Natural killer cell (primary cell): ENCODE measurements at regions of chr7 and their contacts with region 1.

Region 1: DNA sequence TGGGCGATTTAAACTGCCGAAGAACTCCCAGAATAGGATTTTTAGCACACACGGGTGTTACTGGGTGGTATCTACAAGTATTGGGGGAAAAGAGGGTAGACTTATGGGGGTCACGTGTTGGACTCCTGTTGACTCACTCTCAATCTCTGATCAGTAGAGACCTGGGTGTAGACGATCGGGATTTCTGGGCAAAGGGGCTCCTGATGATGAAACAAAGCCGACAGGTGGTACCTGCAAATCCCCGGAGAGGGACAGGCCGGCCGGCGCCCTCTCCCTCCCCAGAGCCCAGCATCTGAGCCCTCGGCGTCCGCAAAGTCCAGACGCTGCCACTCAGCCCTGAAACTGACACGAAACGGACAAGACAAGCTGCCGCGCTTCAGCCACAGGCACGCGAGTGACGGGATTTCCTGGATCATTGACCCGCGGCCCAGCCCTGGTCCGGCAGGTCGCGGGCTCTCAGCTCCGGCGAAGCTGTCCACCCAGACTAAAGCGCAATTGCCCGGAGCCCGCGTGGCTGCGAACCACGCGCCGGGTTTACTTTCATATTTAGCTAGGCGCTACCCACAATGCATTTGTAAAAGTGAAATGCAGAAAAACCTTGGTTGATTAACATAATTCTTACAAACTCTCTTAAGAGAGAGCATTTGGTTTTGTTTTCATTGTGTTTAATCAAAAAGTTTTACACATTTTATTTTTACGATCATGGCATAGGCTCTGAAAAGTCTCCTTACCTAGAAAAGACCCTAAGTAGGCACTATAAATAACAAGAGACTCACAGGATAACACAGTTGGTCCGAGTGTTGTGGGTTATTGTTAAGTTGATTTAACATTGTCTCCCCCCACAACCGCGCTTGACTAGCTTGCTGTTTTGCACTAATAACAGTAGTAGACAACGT is 56.9 kb upstream of the EZH2 start:
- DNase-seq: peak; percentile 63 to 87
- ATAC-seq: peak; percentile 79 to 90 (median 86)
- H3K4me3 ChIP-seq: peak overlapping the region; percentile 85
- H3K4me3 Mint-ChIP-seq: peak overlapping the region; percentile 94
- H3K27ac ChIP-seq: peak overlapping the region; percentile 79
- H3K27ac Mint-ChIP-seq: peak overlapping the region; percentile 95
- H3K4me1 ChIP-seq: peaks cover 7% of the 10 kb centered on the region
- H3K4me1 Mint-ChIP-seq: peaks cover 6 to 13% of the 10 kb centered on the region in 2 donors
- H3K27me3 ChIP-seq: no peaks in the 10 kb centered on the region
- H3K27me3 Mint-ChIP-seq: no peaks in the 10 kb centered on the region
- CTCF ChIP-seq: no peak

Region 2: DNA sequence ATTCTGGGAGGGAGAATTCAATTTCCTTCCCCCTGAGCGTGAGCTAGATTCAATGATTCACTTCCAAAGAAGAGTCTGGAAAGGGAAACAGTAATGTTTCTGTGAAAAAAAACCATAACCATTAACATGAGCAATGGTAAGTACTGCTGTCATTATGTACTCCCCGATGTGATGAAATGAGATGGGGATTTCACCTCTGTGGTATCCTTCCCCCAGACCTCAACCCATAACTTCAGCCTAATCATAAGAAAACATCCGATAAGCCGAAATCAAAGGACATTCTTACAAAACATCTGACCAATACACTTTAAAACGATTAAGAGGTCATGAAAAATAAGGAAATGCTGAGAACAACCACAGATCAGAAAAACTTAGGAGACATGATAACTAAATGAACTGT is 84.1 kb before region 1 on chr7:
- intact Hi-C with region 1: loop called (anchors 1 kb)
- DNase-seq: peak in 1 of 2 donors; percentile 29
- ATAC-seq: peak; percentile 40 to 72 (median 60)
- H3K4me3 ChIP-seq: no peak overlapping the region
- H3K4me3 Mint-ChIP-seq: no peak overlapping the region
- H3K27ac ChIP-seq: no peak overlapping the region
- H3K27ac Mint-ChIP-seq: peak overlapping the region; percentile 30 to 74
- H3K4me1 ChIP-seq: no peaks in the 10 kb centered on the region
- H3K4me1 Mint-ChIP-seq: peaks cover 19 to 24% of the 10 kb centered on the region in 2 donors
- H3K27me3 ChIP-seq: no peaks in the 10 kb centered on the region
- H3K27me3 Mint-ChIP-seq: no peaks in the 10 kb centered on the region
- CTCF ChIP-seq: no peak

Region 3: GRCh38 chr7:148884299-148885022 is 56.5 kb before region 1 on chr7:
- intact Hi-C with region 1: loop called (anchors 2 kb)
- DNase-seq: peak; percentile 95 to 96
- ATAC-seq: peak; percentile 85 to 96 (median 88)
- H3K4me3 ChIP-seq: peak overlapping the region; percentile 50
- H3K4me3 Mint-ChIP-seq: peak overlapping the region; percentile 93
- H3K27ac ChIP-seq: peak overlapping the region; percentile 83
- H3K27ac Mint-ChIP-seq: peak overlapping the region; percentile 96 to 97
- H3K4me1 ChIP-seq: peaks cover 8% of the 10 kb centered on the region
- H3K4me1 Mint-ChIP-seq: peaks cover 14 to 15% of the 10 kb centered on the region in 2 donors
- H3K27me3 ChIP-seq: no peaks in the 10 kb centered on the region
- H3K27me3 Mint-ChIP-seq: no peaks in the 10 kb centered on the region
- CTCF ChIP-seq: no peak

Region 4: DNA sequence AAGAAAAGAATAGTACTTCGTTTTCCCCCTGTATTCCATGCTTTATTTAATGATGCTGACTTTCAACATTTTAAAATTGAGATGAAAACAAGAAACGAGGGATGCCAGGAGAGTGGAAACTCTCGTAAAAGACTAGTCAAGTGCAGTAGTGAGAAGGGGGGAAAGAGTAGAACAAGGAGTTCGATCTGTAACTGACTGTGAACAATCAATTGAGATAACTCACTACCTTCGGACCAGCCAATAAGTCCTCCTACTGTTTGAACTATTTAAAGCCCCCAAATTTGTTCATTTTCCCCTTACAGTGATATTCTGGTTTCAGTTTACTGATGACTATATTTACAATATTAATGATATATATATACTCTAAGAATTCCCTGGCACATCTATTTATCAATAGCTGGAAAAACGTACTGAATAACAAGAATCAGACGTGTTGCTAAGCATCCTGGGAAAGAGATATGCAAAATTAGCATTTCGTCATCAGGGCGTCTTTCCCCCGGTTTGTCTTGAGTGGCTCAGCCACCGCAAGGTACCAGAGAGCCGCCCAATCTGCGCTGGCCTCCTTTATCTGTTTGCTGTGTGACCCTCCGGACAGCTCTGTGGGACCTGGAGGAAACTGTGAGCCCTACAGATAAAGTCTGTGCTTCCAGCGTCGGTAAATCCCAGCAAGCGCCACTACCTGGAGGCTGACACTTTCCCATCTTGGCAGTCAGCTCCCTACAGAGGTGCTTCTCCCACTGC is 46.2 kb after region 1 on chr7:
- intact Hi-C with region 1: loop called (anchors 5 kb)
- DNase-seq: peak; percentile 72 to 94
- ATAC-seq: peak; percentile 85 to 92 (median 87)
- H3K4me3 ChIP-seq: peak overlapping the region; percentile 68
- H3K4me3 Mint-ChIP-seq: peak overlapping the region; percentile 99
- H3K27ac ChIP-seq: peak overlapping the region; percentile 88
- H3K27ac Mint-ChIP-seq: peak overlapping the region; percentile 92 to 96
- H3K4me1 ChIP-seq: peaks cover 35% of the 10 kb centered on the region
- H3K4me1 Mint-ChIP-seq: peaks cover 45 to 55% of the 10 kb centered on the region in 2 donors
- H3K27me3 ChIP-seq: no peaks in the 10 kb centered on the region
- H3K27me3 Mint-ChIP-seq: no peaks in the 10 kb centered on the region
- CTCF ChIP-seq: no peak

Region 5: GRCh38 chr7:149021725-149022062 is 80.7 kb after region 1 on chr7:
- intact Hi-C with region 1: no loop called
- DNase-seq: no peak
- ATAC-seq: no peak
- H3K4me3 ChIP-seq: no peak overlapping the region
- H3K4me3 Mint-ChIP-seq: no peak overlapping the region
- H3K27ac ChIP-seq: no peak overlapping the region
- H3K27ac Mint-ChIP-seq: peak overlapping the region in 1 of 2 donors; percentile 75
- H3K4me1 ChIP-seq: peaks cover 3% of the 10 kb centered on the region
- H3K4me1 Mint-ChIP-seq: peaks cover 25 to 44% of the 10 kb centered on the region in 2 donors
- H3K27me3 ChIP-seq: no peaks in the 10 kb centered on the region
- H3K27me3 Mint-ChIP-seq: no peaks in the 10 kb centered on the region
- CTCF ChIP-seq: no peak